Activated CD8-positive, alpha-beta memory T cell treated with anti-CD3 and anti-CD28 coated beads, Interleukin-2, amount 10 ng/mL, durations not matched to agents 7 days and 5 days (primary cell): ENCODE measurements at regions of chr22 and their contacts with region 1.

Region 1: DNA sequence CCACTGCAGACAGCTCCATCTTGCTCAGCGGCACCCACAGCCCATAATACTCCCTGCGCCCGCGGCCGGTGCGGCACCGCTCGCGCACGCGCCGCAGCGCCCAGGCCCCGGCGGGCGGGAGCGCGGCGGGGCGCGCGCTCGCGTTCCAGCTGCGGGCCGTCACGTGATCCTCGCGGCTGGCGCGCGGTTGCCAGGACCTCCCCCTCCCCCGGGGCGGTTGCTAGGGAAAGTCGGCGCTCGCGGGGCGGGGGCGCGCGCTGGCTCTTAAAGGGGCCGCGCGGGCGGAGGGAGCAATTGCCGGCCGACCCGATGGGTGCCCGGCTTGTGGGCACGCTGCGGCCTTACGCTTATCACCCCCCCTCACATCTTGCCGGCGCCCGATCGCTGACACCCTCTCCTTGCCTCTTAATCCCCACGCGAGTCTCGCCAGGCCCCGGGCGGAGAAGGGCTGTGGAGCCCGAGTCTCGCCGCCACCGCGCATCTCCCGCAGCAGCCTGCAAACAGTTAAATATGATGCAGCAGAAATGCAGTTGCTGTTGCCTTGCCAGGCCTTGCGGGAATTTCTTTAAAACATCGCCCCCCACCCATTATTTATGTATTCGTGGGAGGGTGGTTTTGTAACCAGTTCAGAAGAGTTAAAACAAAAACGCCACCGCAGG is at the start of gene CBX6:
- DNase-seq: peak; percentile 95
- ATAC-seq: peak; percentile 77
- H3K4me3 Mint-ChIP-seq: peak within 1 kb of the TSS; percentile 87
- H3K27ac Mint-ChIP-seq: peak within 1 kb of the TSS; percentile 88
- H3K4me1 Mint-ChIP-seq: peaks cover 47% of the 10 kb centered on the region
- H3K27me3 Mint-ChIP-seq: peaks cover 10% of the 10 kb centered on the region
- total RNA-seq, gene CBX6: 73.1 to 124 TPM

Region 2: DNA sequence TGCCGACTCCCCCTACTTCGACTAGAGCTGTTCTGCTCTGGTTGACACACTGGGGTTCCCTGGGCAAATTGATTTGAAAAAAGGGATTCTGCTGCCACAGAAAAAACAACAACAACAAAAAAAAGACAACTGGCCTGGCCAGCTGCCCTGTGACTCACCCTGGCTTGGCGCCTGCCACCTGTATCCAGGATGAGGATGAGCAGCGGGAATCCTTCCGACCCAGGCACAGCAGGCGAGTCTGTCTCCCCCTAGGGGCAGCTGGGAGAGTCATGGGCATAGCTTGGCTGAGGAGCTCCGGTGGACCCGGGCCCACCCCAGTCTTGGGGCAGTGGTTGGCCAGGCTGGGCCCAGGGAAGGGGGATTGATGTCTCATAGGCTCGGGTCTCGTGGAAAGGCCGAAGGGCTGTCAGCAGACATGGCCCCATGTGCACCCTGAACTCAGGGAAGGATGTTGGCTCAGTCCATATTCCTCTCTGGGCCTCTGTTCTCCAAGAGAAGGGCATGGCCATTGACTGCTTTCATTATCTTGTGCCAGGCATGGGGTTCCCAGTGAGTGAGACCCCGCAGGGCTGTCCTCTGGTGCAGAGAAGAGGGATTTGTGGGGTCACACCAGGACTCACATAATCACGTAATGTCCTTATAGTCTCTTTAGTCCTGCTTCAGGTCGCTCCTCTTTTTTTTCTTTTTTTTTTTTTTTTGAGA is 106.1 kb before region 1 on chr22:
- CTCF ChIA-PET with region 1: interaction called, 20 read pairs
- DNase-seq: no peak
- ATAC-seq: peak; percentile 56
- H3K4me3 Mint-ChIP-seq: no peak overlapping the region
- H3K27ac Mint-ChIP-seq: no peak overlapping the region
- H3K4me1 Mint-ChIP-seq: no peaks in the 10 kb centered on the region
- H3K27me3 Mint-ChIP-seq: no peaks in the 10 kb centered on the region

Region 3: DNA sequence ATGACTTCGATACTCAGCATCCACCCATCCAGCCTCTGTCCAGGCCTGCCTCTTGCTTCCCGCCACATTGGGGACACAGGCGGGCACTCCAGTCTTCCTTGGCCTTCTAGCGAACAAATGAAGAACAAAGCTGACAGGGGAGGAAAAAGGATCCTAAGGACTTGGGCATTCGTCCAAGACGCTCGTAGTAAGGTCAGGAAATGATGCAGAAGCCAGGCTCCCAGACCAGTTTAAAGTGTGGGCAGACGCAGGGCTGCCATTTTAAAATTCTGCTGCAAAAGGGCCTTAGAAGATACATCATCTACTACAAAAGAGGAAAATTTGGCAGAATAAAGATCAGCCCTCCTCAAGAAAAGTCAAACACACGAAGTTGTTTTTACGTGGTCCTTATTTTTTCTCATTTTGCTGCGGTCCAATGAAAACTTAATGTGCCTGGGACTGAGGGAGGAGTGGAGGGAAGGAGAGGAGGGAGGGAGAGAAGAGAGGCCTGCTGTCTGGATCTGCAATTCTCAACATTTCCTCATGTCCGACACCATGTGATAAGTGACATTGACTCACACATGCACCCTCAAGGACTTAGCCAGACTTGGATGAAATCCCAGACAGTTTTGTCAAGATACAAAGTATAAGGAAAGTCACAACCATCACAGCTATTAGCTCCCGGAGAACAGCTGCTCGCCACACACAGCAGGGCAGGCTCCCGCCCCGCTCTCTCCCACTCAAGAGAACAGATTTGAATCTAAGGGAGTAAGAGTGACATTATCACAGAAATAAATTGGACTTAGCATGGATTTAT is 84.1 kb before region 1 on chr22:
- CTCF ChIA-PET with region 1: no interaction called
- DNase-seq: no peak
- ATAC-seq: no peak
- H3K4me3 Mint-ChIP-seq: no peak overlapping the region
- H3K27ac Mint-ChIP-seq: no peak overlapping the region
- H3K4me1 Mint-ChIP-seq: peaks cover 5% of the 10 kb centered on the region
- H3K27me3 Mint-ChIP-seq: no peaks in the 10 kb centered on the region

Region 4: DNA sequence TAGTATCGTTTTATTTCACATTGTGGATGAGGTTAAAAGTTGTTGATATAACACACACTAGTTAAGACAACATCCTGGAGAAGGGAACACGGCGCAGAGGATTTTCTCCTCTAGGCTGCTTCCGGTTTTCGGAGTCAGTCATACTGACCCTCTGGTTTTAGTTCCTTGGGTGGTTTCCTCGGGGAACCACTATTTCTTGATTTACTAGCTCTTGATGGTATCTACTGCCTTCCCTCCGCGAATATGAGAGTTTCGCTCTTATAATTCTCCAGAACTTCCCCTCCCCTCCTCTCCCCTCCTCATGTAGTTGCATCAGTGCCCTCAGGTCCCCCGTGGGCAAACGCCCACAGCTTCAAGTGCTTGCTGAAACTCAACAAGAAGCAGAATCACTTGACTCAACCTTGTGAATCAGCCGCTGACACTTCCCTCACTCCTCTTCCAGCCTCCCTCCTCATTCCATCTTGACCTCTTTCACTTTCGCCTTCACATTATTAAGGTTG is 69.2 kb after region 1 on chr22:
- CTCF ChIA-PET with region 1: interaction called, 32 read pairs
- DNase-seq: peak; percentile 73
- ATAC-seq: peak; percentile 79
- H3K4me3 Mint-ChIP-seq: peak overlapping the region; percentile 68
- H3K27ac Mint-ChIP-seq: peak overlapping the region; percentile 79
- H3K4me1 Mint-ChIP-seq: peaks cover 36% of the 10 kb centered on the region
- H3K27me3 Mint-ChIP-seq: peaks cover 24% of the 10 kb centered on the region

Region 5: DNA sequence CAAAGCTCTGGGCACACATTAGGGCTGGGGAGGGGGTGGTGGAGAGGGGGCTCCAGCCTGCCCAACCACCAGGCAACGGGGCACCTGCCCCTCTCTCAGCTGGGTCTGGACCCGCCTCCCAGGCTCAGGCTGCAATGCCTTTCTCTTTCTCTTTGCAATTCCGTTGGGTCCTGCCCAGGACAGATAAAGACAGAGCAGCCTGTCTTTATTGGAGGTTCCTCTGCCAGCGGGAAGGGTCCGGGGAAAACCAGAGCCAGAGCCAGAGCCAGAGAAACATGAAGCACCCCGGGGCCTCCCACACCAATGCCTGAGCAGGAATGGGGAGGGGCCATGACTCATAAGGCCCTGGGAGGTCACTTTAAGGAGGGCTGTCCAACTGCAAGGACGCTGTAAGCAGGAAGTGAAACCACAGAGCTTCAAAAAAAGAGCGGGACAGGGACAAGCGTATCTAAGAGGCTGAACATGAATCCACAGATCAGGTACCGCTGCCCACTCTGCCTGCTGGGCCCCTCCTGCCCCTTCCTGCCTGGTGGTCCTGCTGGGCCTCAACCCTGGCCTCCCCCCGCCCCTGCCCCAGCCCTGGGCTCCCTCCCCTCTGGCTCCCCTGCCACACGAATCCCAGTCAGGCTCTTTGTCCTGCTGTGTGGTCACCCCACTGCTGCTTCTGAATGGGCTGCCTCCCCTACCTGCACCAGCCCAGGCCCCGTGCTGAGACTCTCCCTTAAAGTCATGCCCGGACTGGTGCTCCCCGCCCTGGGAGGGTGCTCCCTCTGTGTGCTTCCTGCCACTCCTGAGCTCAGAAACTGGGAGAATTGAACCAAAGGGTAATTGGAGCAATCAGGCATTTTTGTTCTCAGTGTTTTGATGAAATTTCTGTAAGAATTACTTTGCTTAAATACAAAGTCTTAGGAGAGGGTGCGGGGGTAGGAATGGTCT is 110.0 kb after region 1 on chr22 and contains the start of gene APOBEC3B:
- CTCF ChIA-PET with region 1: interaction called, 47 read pairs
- DNase-seq: peak; percentile 92
- ATAC-seq: peak; percentile 84
- H3K4me3 Mint-ChIP-seq: peak within 1 kb of the TSS; percentile 76
- H3K27ac Mint-ChIP-seq: peak within 1 kb of the TSS; percentile 97
- H3K4me1 Mint-ChIP-seq: peaks cover 54% of the 10 kb centered on the region
- H3K27me3 Mint-ChIP-seq: no peaks in the 10 kb centered on the region
- total RNA-seq, gene APOBEC3B: 32.8 to 82.6 TPM

Region 6: DNA sequence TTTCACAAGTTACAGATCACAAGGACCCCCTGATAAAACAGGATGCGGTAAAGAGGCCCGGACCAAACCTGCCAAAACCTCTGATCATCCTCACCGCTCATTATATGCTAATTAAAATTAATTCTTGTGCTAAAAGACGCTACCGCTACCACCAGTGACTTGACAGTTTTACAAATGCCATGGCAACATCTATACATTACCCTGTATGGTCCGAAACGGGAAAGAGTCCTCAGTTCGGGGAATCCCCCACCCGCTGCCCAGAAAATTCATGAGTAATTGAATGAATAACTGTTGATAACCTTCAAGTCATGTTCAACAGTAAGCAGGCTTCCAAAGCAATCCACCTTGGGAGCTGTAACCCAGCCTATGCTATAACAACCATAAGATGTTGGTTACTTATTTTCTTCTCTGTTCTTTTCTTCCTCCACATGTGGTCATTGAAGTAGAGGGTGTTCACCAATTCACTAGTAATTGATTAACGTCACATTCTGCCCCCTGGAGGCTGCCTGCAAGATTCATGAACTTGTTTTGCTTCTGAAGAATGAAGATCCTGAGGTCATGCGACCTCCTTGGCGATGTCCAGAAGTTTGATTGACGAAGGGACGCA is 245.4 kb after region 1 on chr22:
- CTCF ChIA-PET with region 1: interaction called, 19 read pairs
- DNase-seq: peak; percentile 90
- ATAC-seq: peak; percentile 81
- H3K4me3 Mint-ChIP-seq: peak overlapping the region; percentile 59
- H3K27ac Mint-ChIP-seq: peak overlapping the region; percentile 91
- H3K4me1 Mint-ChIP-seq: peaks cover 60% of the 10 kb centered on the region
- H3K27me3 Mint-ChIP-seq: no peaks in the 10 kb centered on the region